Activated CD4-positive, alpha-beta T cell treated with anti-CD3 and anti-CD28 coated beads for 36 hours (primary cell): ENCODE measurements at regions of chr2 and their contacts with region 1.

Region 1: DNA sequence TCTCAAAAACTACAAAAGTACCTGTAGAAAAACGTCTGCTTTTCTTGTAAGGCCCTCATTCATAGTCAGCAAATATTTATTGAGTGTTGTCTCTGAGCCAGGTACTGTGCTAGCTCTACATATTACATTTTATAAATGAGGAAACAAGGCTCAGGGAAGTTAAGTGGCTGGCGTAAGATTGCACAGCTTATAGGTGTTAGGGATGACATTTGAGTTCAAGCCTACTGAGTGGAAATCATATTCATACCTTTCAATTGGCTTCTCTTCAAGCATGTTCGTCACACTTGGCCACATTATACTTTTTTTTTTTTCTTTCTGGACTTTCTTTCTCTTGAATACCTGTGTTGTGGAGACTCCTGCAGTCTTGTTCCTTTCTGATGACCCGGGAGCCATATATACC is 5.9 kb downstream of the NCOA1 start:
- DNase-seq: no peak
- ATAC-seq: peak; percentile 28
- H3K4me3 Mint-ChIP-seq: no peak overlapping the region
- H3K27ac Mint-ChIP-seq: no peak overlapping the region
- H3K4me1 Mint-ChIP-seq: peaks cover 56% of the 10 kb centered on the region
- H3K27me3 Mint-ChIP-seq: no peaks in the 10 kb centered on the region

Region 2: DNA sequence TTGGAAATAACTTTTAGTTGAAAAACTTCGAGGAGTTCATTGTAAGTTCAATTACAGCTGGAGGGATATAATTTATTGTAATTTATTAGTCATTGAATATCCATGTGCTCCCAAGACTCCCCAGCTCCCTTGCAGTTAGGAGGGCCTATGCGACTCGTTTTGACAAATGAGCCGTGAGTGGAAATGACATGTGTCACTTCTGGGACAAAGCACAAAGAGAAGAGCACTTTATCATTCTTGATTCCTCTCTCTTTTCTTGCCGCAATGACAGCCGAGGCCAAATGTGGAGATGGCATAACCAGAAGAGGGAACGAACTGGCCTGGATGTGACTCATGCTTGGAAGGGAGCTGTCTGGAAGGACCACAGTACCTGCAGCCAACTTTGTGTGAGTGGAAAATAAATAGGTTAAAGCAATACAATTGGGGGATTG is 92.5 kb before region 1 on chr2:
- CTCF ChIA-PET with region 1: no interaction called
- POLR2A ChIA-PET with region 1: no interaction called
- intact Hi-C with region 1: no loop called
- DNase-seq: no peak
- ATAC-seq: no peak
- H3K4me3 Mint-ChIP-seq: no peak overlapping the region
- H3K27ac Mint-ChIP-seq: no peak overlapping the region
- H3K4me1 Mint-ChIP-seq: peaks cover 18% of the 10 kb centered on the region
- H3K27me3 Mint-ChIP-seq: peaks cover 19% of the 10 kb centered on the region

Region 3: DNA sequence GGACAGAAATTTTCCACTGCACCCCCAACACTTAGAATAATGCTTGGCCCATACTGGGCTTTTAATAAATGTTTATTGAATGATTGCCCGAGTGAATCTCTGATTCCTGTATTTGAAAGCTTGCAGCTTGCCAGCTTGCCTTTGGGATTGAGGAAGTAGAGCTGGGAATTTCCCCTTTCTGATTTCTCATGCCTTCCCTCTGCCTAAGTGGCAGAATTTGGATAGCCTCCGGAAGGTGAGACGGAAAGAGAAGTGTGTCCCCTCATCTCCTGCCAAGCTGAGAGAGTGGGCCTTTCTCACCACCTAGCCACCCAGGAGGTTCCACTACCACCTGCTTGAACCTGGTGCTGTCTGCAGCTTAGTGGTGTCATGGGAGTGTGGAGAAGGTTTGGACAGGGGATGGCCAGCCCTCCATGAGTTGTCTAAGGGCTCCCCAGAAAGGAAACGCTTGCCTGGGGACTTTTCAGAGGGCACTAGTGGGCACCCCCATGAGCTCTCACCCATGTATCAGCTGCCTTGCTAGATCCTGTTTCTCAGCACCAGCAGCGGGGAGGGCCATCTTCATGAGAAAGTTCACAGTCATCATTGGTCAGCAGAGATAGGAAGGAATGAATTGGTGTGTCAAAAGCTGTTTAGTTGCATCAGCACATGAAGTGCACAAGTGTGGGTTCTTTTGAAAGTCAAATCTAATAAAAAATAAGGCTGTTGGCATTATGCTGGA is 14.5 kb before region 1 on chr2:
- CTCF ChIA-PET with region 1: interaction called, 4 read pairs
- POLR2A ChIA-PET with region 1: interaction called, 11 read pairs
- intact Hi-C with region 1: no loop called
- DNase-seq: no peak
- ATAC-seq: peak; percentile 36
- H3K4me3 Mint-ChIP-seq: no peak overlapping the region
- H3K27ac Mint-ChIP-seq: no peak overlapping the region
- H3K4me1 Mint-ChIP-seq: peaks cover 3% of the 10 kb centered on the region
- H3K27me3 Mint-ChIP-seq: peaks cover 5% of the 10 kb centered on the region

Region 4: GRCh38 chr2:24577481-24577880 is 80.5 kb after region 1 on chr2:
- CTCF ChIA-PET with region 1: no interaction called
- POLR2A ChIA-PET with region 1: no interaction called
- intact Hi-C with region 1: no loop called
- DNase-seq: no peak
- ATAC-seq: peak; percentile 76
- H3K4me3 Mint-ChIP-seq: peak overlapping the region; percentile 3
- H3K27ac Mint-ChIP-seq: peak overlapping the region; percentile 79
- H3K4me1 Mint-ChIP-seq: peaks cover 76% of the 10 kb centered on the region
- H3K27me3 Mint-ChIP-seq: no peaks in the 10 kb centered on the region